Activated naive CD4-positive, alpha-beta T cell treated with anti-CD3 and anti-CD28 coated beads for 36 hours (primary cell): ENCODE measurements at regions of chr12 and their contacts with region 1.

Region 1: GRCh38 chr12:12645485-12645884 is 33.8 kb downstream of the CREBL2 start:
- DNase-seq: peak; percentile 38
- H3K4me3 Mint-ChIP-seq: no peak overlapping the region
- H3K27ac Mint-ChIP-seq: peak overlapping the region; percentile 46
- H3K4me1 Mint-ChIP-seq: peaks cover 14% of the 10 kb centered on the region
- H3K27me3 Mint-ChIP-seq: no peaks in the 10 kb centered on the region

Region 2: GRCh38 chr12:12630850-12631249 is 14.6 kb before region 1 on chr12:
- CTCF ChIA-PET with region 1: interaction called, 25 read pairs
- intact Hi-C with region 1: no loop called
- DNase-seq: no peak
- H3K4me3 Mint-ChIP-seq: no peak overlapping the region
- H3K27ac Mint-ChIP-seq: no peak overlapping the region
- H3K4me1 Mint-ChIP-seq: peaks cover 55% of the 10 kb centered on the region
- H3K27me3 Mint-ChIP-seq: no peaks in the 10 kb centered on the region